Dendritic cell treated with granulocyte-macrophage colony-stimulating factor and Interleukin-4, amounts not matched to agents 40 ng/mL and 50 ng/mL, for 4 days (primary cell): ENCODE measurements at regions of chr3 and their contacts with region 1.

Region 1: GRCh38 chr3:98817547-98818041 is 54.5 kb downstream of the ST3GAL6 start:
- H3K4me3 Mint-ChIP-seq: no peak overlapping the region
- H3K27ac Mint-ChIP-seq: no peak overlapping the region
- H3K4me1 Mint-ChIP-seq: no peaks in the 10 kb centered on the region
- H3K27me3 Mint-ChIP-seq: no peaks in the 10 kb centered on the region

Region 2: GRCh38 chr3:98039322-98040024 is 778.1 kb before region 1 on chr3:
- intact Hi-C with region 1: loop called (anchors 5 kb)
- H3K4me3 Mint-ChIP-seq: peak overlapping the region; percentile 71
- H3K27ac Mint-ChIP-seq: no peak overlapping the region
- H3K4me1 Mint-ChIP-seq: peaks cover 5% of the 10 kb centered on the region
- H3K27me3 Mint-ChIP-seq: peaks cover 10% of the 10 kb centered on the region

Region 3: GRCh38 chr3:98522244-98523090 is 295.1 kb before region 1 on chr3 and contains the start of gene CLDND1:
- intact Hi-C with region 1: loop called (anchors 10 kb)
- H3K4me3 Mint-ChIP-seq: peak within 1 kb of the TSS; percentile 85
- H3K27ac Mint-ChIP-seq: peak within 1 kb of the TSS; percentile 98
- H3K4me1 Mint-ChIP-seq: peaks cover 35% of the 10 kb centered on the region
- H3K27me3 Mint-ChIP-seq: no peaks in the 10 kb centered on the region

Region 4: DNA sequence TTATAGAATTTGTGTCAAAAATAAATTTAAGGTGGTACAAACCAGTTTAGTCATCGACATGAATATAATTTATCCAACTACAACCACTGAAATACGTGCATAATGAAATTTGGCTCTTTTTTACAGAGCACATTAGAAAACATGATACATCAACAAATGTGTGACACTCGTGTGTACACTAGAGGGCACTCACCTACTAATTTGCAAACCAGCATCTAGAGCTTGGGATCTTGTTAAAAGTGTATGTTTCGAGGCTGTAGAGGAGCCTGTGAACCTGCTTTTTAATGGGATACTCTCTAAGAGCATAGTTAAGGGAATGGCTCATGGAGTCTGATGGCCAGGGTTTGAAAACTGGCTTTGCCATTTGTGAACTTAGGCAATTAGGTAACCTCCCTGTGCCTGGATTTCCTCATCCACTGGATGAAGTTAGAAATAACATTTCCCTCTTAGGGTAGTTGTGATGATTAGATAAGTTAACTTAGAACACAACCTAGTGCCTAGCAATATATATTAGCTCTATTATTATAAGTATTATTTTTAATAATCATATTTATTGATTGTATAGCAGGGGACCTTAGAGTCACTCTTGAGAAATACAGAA is 215.4 kb before region 1 on chr3:
- intact Hi-C with region 1: loop called (anchors 1 kb)
- H3K4me3 Mint-ChIP-seq: no peak overlapping the region
- H3K27ac Mint-ChIP-seq: no peak overlapping the region
- H3K4me1 Mint-ChIP-seq: peaks cover 30% of the 10 kb centered on the region
- H3K27me3 Mint-ChIP-seq: no peaks in the 10 kb centered on the region

Region 5: GRCh38 chr3:98670020-98670419 is 147.6 kb before region 1 on chr3:
- intact Hi-C with region 1: no loop called
- H3K4me3 Mint-ChIP-seq: no peak overlapping the region
- H3K27ac Mint-ChIP-seq: no peak overlapping the region
- H3K4me1 Mint-ChIP-seq: no peaks in the 10 kb centered on the region
- H3K27me3 Mint-ChIP-seq: no peaks in the 10 kb centered on the region

Region 6: GRCh38 chr3:99172736-99173657 is 355.4 kb after region 1 on chr3:
- intact Hi-C with region 1: loop called (anchors 1 kb)
- H3K4me3 Mint-ChIP-seq: no peak overlapping the region
- H3K27ac Mint-ChIP-seq: no peak overlapping the region
- H3K4me1 Mint-ChIP-seq: no peaks in the 10 kb centered on the region
- H3K27me3 Mint-ChIP-seq: no peaks in the 10 kb centered on the region

Region 7: DNA sequence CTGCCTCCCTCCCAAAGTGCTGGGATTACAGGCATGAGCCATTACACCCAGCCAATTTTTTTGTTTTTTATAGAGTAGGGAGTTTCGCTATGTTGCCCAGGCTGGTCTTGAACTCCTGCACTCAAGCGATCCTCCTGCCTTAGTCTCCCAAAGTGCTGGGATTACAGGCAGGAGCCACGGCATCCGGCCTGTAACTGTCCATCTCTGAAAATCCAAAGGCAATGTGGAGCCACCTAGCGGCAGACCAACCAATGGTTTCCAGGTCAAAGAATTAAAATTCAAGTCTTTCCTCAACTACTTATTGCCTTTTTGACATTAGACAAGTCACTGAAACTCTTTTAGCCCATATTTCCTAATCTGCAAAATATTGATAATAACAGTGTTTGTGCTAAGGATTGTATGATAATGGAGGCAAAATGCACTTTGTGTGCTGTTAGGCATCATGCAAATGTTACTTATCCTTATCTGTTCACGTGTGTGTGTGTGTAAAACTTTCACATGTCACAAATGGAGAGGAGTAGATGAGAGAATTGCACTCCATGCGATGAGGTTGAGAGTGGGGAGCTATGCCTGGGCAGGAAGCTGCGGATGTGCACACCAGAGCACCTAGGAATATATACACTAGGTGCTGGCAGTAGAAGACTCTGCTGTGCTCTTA is 869.5 kb after region 1 on chr3:
- intact Hi-C with region 1: loop called (anchors 2 kb)
- H3K4me3 Mint-ChIP-seq: no peak overlapping the region
- H3K27ac Mint-ChIP-seq: no peak overlapping the region
- H3K4me1 Mint-ChIP-seq: no peaks in the 10 kb centered on the region
- H3K27me3 Mint-ChIP-seq: no peaks in the 10 kb centered on the region